Gastrocnemius medialis (tissue), 4 donors: ENCODE measurements at regions of chr6 and their contacts with region 1.

Region 1: GRCh38 chr6:15621203-15622044 is 41.4 kb downstream of the DTNBP1 start:
- DNase-seq: peak; percentile 15 to 40
- ATAC-seq: peak; percentile 59 to 60
- H3K4me3 ChIP-seq: no peak overlapping the region
- H3K27ac ChIP-seq: peak overlapping the region; percentile 72 to 79 (median 76)
- H3K4me1 ChIP-seq: peaks cover 33 to 34% of the 10 kb centered on the region in 2 donors
- H3K27me3 ChIP-seq: no peaks in the 10 kb centered on the region
- CTCF ChIP-seq: no peak
- POLR2A ChIP-seq: no peak

Region 2: DNA sequence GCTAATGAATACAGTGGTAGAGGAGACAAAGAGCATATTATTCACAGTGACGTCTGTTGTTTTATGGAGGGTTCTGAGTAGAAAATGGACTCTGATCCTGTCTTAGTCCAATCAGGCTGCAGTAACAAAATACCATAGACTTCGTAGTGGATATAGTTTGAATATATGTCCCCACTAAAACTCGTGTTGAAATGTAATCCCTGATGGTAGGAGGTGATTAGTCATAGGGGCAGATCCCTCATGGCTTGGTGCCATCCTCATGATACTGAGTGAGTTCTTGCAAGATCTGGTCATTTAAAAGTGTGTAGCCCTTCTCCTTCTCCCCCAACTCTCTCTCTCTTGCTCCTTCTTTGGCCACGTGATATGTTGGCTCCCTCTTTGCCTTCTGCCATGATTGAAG is 1421.4 kb before region 1 on chr6:
- in situ Hi-C with region 1: loop called (anchors 10 to 25 kb)
- intact Hi-C with region 1: no loop called
- DNase-seq: no peak
- ATAC-seq: no peak
- H3K4me3 ChIP-seq: no peak overlapping the region
- H3K27ac ChIP-seq: no peak overlapping the region
- H3K4me1 ChIP-seq: no peaks in the 10 kb centered on the region
- H3K27me3 ChIP-seq: no peaks in the 10 kb centered on the region
- CTCF ChIP-seq: no peak
- POLR2A ChIP-seq: no peak

Region 3: GRCh38 chr6:14728396-14729024 is 892.9 kb before region 1 on chr6:
- in situ Hi-C with region 1: no loop called
- intact Hi-C with region 1: loop called (anchors 10 kb)
- DNase-seq: peak in 1 of 2 donors; percentile 38
- ATAC-seq: peak in 1 of 2 donors; percentile 41
- H3K4me3 ChIP-seq: no peak overlapping the region
- H3K27ac ChIP-seq: peak overlapping the region in 1 of 4 donors; percentile 39
- H3K4me1 ChIP-seq: no peaks in the 10 kb centered on the region
- H3K27me3 ChIP-seq: no peaks in the 10 kb centered on the region
- CTCF ChIP-seq: no peak
- POLR2A ChIP-seq: no peak

Region 4: DNA sequence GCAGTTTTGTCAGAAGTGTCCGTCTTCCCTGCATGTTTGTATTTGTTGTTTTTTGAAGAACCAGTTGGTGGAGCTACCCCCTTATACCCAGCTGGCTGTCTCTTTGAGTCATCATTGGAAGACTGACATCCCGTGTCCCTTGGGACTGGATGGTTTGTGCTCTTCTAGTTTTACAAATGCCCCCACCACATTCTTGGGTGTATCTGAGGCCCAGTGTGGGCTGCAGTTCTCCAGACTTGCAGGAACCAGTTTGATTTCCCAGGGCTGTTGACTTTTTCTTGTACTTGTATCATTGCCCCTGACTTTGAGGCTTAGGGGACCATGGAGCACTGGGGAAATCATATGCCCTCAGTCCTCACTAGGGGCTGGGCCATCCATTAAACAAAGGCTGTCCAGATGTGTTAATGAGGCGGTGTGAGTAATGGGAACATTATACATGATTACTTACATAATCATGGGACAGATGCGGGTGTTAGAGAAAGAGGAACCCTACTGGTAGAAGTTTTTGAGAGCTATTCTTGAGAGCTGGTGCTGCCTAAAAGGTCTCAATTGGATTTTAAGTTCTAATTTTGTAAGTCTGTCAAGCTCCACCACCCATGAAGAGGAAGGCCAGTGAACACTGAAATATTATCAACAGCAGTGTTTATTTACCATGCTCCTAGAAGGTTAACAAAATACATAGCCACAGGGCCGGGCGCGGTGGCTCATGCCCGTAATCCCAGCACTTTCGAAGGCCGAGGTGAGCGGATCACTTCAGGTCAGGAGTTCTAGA is 367.2 kb before region 1 on chr6:
- in situ Hi-C with region 1: loop called in 2 of 4 experiments (anchors 25 kb)
- intact Hi-C with region 1: loop called (anchors 10 kb)
- DNase-seq: peak in 1 of 2 donors; percentile 42
- ATAC-seq: peak; percentile 51 to 55
- H3K4me3 ChIP-seq: no peak overlapping the region
- H3K27ac ChIP-seq: peak overlapping the region; percentile 89 to 98 (median 95)
- H3K4me1 ChIP-seq: peaks cover 89 to 93% of the 10 kb centered on the region in 2 donors
- H3K27me3 ChIP-seq: no peaks in the 10 kb centered on the region
- CTCF ChIP-seq: peak in 1 of 5 experiments; percentile 22
- POLR2A ChIP-seq: no peak

Region 5: DNA sequence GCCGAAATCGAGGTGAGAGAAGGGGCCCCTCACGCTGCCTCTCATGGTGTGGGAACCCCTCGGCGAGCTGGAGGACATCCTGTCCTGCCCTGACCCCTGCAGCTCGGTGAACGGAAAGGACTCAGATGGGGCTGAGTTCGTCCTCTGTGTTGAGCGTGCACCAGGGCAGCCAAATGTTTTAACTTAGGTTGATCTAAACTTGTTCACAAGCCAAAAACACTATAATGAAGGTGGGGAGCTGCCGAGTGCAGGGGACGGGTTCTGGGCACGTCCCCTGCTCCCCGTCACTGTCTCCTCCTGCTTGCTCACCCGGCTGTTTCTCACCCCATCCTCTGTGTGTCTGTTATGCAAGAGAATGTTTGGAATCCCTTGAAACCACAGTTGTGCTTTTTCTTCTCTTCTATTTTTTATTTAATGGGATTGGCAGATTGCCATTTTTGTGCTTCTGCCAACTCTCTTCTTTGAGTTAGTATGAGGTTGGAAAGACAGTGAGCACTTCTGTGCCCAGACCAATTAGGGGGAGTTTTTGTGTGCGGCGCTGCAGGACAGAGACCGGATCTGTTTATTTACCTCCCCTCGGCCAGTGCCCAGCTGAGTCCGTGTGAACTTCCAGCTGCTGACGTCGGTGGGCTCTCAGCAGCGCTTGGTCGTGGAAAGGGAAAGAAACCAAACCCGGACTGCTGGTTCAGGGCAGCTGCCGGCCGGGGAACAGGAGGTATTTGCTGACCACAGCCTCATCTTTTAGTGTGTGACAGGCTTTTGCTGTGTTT is 116.7 kb before region 1 on chr6:
- in situ Hi-C with region 1: loop called in 1 of 4 experiments (anchors 25 kb)
- intact Hi-C with region 1: no loop called
- DNase-seq: peak; percentile 64 to 79
- ATAC-seq: peak; percentile 52 to 54
- H3K4me3 ChIP-seq: peak overlapping the region; percentile 34 to 46 (median 39)
- H3K27ac ChIP-seq: peak overlapping the region; percentile 82 to 92 (median 86)
- H3K4me1 ChIP-seq: peaks cover 47 to 61% of the 10 kb centered on the region in 2 donors
- H3K27me3 ChIP-seq: no peaks in the 10 kb centered on the region
- CTCF ChIP-seq: no peak
- POLR2A ChIP-seq: peak in 1 of 2 donors; percentile 41

Region 6: DNA sequence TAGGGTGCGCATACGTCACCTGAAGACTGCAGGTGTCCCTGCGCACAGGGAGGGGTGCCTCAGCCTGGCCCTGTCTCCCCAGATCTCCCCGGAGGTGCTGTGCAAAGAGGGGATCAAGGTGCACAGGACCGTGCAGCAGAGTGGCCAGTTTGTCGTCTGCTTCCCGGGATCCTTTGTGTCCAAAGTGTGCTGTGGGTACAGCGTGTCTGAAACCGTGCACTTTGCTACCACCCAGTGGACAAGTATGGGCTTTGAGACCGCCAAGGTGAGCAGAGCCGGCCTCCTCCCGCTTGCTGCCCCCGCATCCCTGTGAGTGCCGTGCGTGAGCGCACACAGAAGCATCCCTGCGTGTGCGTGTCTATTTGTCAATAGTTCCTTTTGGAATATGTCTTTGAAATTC is 109.3 kb before region 1 on chr6:
- in situ Hi-C with region 1: loop called in 2 of 4 experiments (anchors 10 to 25 kb)
- intact Hi-C with region 1: loop called (anchors 5 kb)
- DNase-seq: peak in 1 of 2 donors; percentile 55
- ATAC-seq: peak in 1 of 2 donors; percentile 22
- H3K4me3 ChIP-seq: no peak overlapping the region
- H3K27ac ChIP-seq: peak overlapping the region; percentile 86 to 92 (median 88)
- H3K4me1 ChIP-seq: peaks cover 36 to 54% of the 10 kb centered on the region in 2 donors
- H3K27me3 ChIP-seq: no peaks in the 10 kb centered on the region
- CTCF ChIP-seq: peak; percentile 5 to 55 (median 41)
- POLR2A ChIP-seq: no peak

Region 7: DNA sequence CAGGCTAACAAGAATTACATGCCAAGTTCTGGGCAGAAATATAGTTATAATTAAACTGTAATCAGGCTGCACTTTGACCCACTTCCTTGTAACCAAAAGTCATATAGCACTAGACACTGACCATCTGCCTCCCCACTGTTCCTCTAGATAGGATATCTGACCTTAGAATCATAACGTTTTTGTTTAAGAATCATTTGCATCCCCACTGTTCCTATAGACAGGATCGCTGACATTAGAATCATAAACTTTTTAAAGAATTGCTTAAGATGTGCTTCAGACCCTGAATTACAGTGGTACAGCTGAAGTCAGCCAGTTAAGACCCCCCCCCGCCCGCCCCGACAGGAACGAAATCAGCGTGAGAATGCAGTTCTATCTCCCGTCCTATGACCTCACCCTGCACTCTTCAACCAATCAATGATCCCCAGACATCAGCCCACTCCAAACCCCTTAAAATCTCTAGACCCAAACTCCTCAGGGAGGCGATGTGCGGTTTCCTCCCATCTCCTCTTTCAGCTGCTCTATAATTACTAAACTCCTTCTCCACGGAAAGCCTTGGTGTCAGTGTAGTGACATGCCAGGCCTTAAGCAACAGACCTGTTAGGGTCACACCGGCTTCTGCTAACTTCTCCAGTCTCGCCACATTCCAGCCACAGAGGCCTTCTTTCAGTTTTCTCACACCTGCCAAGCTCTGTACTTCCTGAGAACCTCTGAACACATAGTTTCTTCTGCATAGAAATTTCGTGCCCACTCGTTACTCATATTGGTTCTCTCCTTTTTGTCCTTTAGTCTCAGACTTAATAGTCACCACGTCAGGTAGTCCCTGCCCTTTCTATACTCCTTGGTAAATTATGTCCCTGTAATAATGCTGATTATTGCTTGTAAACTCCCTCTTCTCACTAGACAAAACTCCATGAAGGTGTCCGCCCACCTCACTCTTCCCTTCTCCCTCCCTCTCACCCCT is 52.1 kb before region 1 on chr6:
- in situ Hi-C with region 1: no loop called
- intact Hi-C with region 1: no loop called
- DNase-seq: no peak
- ATAC-seq: peak; percentile 49 to 60
- H3K4me3 ChIP-seq: no peak overlapping the region
- H3K27ac ChIP-seq: no peak overlapping the region
- H3K4me1 ChIP-seq: peaks cover 3 to 5% of the 10 kb centered on the region in 2 donors
- H3K27me3 ChIP-seq: no peaks in the 10 kb centered on the region
- CTCF ChIP-seq: no peak
- POLR2A ChIP-seq: no peak